A673 (cell line): ENCODE measurements at regions of chr1 and their contacts with region 1.

Region 1: DNA sequence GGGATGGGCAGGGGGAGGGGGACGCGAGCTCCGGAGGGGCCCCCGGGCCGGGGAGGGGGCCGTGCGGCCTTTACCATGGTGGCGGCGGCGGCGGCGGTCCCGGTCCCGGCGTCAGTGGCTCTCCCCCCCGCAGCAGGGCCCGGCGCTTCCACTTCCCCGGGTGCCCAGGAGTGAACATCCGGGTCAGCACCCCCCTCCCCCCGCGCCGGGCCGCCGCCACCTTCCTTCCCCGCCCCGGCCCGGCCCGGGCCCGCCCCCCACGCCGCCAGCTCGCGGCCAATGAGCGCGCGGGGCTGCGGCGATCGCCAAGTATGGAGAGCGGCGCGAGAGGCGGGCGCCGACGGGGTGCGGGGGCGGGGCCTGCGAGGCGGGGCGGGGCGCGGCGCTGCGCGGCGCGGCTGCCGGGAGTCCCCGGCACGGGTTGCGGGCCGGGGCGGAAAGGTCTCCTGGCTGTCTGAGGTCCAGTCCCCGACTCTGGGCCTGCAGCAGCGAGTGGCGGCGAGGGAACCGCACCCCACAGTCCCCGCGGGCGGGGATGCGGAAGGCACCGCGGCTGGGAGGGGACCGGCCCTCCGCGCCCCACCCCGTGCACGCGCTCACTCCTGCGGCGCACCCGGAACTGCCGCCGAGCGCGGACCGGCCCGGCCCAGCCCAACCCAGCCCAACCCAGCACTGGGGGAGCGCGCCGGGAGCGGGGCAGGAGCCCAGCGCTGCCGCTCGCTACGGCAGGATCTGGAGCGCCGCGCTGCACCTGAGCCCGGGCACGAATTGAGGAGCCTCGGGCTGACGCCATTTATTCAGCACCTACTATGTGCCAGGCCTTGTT is at the start of gene CAPZB:
- DNase-seq: peak; percentile 95
- H3K4me3 ChIP-seq: peak within 1 kb of the TSS; percentile 90
- H3K27ac ChIP-seq: peak within 1 kb of the TSS; percentile 98
- H3K4me1 ChIP-seq: peaks cover 14% of the 10 kb centered on the region
- H3K27me3 ChIP-seq: no peaks in the 10 kb centered on the region
- CTCF ChIP-seq: no peak
- total RNA-seq, gene CAPZB: 206 and 214 TPM in 2 replicates

Region 2: GRCh38 chr1:19597496-19598309 is 112.1 kb after region 1 on chr1:
- CTCF ChIA-PET with region 1: interaction called, 11 read pairs
- POLR2A ChIA-PET with region 1: no interaction called
- intact Hi-C with region 1: no loop called
- DNase-seq: peak; percentile 53
- H3K4me3 ChIP-seq: peak overlapping the region; percentile 85
- H3K27ac ChIP-seq: peak overlapping the region; percentile 89
- H3K4me1 ChIP-seq: peaks cover 16% of the 10 kb centered on the region
- H3K27me3 ChIP-seq: no peaks in the 10 kb centered on the region
- CTCF ChIP-seq: no peak